ENCODE measurements at regions of chr7 and their contacts with region 1.

Region 1: DNA sequence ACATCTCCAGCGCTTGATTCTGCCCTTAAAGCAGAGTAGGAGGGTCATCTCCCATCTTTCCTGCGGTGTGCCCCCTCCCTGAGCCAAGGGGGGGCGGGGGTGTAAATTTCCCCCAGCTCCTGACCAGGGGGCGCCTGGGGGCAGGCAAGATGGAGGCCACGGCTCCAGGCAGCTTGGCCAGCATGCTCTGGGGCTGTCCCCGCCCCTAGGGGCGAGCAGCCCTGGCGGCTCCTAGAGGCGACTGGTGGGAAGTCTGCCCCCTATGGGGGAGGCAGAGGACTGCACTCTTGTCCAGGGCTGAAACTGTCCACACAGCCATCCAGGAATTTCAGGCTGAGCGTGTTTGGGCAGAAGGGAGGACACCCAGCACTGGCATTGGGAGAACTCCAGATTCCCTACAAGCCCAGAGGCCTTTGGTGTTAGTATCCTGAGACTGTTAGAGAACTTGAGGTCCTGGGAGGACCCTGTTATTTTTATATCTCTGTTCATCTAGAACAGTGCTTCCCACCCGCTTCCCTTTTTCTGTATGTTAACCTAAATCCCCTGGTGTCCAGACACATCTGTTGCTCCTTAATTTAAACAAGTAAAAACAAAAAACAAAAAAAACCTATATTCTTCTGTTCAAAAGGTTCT is 4.6 kb downstream of the STRA8 start:
- DNase-seq: peak in 1 of 2 experiments; percentile 84
- H3K4me3 ChIP-seq: no peak overlapping the region
- H3K27ac ChIP-seq: no peak overlapping the region
- H3K4me1 ChIP-seq: peaks cover 0 to 9% (median 1%) of the 10 kb centered on the region in 4 experiments; a peak in 5 of 7 replicates
- H3K27me3 ChIP-seq: no peaks in the 10 kb centered on the region
- CTCF ChIP-seq: peak; percentile 75 to 93 (median 83)
- EP300 ChIP-seq: no peak
- POLR2A ChIP-seq: no peak
- RAD21 ChIP-seq: peak; percentile 41 to 58

Region 2: DNA sequence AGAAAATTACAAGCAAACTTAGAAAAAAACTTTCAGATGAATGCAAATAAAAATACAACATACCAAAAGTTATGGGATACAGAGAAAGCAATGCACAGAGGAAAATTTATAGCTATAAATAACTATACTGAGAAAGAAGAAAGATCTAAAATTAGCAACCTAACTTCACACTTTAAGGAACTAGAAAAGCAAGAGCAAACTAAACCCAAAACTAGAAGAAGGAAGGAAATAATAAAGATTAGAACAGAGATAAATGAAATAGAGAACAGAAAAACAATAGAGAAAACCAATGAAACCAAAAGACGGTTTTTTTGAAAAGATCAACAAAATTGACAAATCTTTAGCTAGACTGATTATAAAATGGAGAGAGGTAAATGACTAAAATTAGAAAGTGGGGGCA is 14.2 kb before region 1 on chr7:
- CTCF ChIA-PET with region 1: interaction called, 16 read pairs
- POLR2A ChIA-PET with region 1: no interaction called
- DNase-seq: no peak
- H3K4me3 ChIP-seq: no peak overlapping the region
- H3K27ac ChIP-seq: no peak overlapping the region
- H3K4me1 ChIP-seq: peaks cover 0 to 4% (median 1%) of the 10 kb centered on the region in 4 experiments; a peak in 2 of 7 replicates
- H3K27me3 ChIP-seq: no peaks in the 10 kb centered on the region
- CTCF ChIP-seq: no peak
- EP300 ChIP-seq: no peak
- POLR2A ChIP-seq: no peak
- RAD21 ChIP-seq: no peak

Measured in H1 (cell line).